ENCODE measurements at regions of chr15 and their contacts with region 1.

Region 1: DNA sequence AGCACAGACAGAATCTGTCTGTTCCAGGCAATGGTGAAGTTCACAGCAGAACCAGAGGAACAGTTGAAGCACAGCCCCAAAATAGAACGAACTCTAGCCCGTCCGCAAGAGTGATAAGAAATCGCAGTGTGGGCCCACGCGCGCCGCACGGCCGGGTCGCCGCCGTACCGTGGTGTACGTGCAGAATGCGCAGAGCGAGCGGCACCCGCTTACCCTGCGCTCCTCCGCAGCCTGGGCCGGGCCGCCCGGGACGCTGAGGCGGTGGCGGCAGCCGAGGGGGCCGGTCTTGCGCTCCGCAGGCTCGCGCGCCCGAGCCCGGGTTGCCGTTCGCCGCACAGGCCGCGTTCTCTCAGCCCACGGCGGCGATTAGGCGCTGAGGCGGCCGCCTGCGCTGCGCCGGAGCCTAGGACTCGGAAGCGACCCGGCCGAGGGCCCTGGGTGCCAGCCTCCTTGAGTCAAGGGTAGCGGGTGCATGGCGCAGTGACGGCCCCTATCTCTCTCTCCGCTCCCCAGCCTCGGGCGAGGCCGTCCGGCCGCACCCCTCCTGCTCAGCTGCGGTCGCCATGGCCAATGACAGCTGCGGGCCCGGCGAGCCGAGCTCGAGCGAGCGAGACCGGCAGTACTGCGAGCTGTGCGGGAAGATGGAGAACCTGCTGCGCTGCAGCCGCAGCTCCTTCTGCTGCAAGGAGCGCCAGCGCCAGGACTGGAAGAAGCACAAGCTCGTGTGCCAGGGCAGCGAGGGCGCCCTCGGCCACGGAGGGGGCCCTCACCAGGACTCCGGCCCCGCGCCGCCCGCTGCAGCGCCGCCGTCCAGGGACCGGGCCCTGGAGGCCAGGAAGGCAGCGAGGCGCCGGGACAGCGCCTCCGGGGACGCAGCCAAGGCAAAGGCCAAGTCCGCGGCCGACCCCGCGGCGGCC is 20.5 kb downstream of the WDR73 start:
- DNase-seq: peak; percentile 60
- H3K4me3 Mint-ChIP-seq: peak overlapping the region; percentile 95
- H3K27ac Mint-ChIP-seq: peak overlapping the region; percentile 98
- H3K4me1 Mint-ChIP-seq: peaks cover 57% of the 10 kb centered on the region
- H3K27me3 Mint-ChIP-seq: no peaks in the 10 kb centered on the region

Region 2: GRCh38 chr15:83626171-83626802 is 1007.3 kb before region 1 on chr15:
- intact Hi-C with region 1: no loop called
- DNase-seq: no peak
- H3K4me3 Mint-ChIP-seq: no peak overlapping the region
- H3K27ac Mint-ChIP-seq: no peak overlapping the region
- H3K4me1 Mint-ChIP-seq: no peaks in the 10 kb centered on the region
- H3K27me3 Mint-ChIP-seq: no peaks in the 10 kb centered on the region

Region 3: GRCh38 chr15:84570164-84570735 is 63.3 kb before region 1 on chr15:
- intact Hi-C with region 1: loop called (anchors 1 kb)
- DNase-seq: peak; percentile 52
- H3K4me3 Mint-ChIP-seq: peak overlapping the region; percentile 84
- H3K27ac Mint-ChIP-seq: peak overlapping the region; percentile 90
- H3K4me1 Mint-ChIP-seq: peaks cover 11% of the 10 kb centered on the region
- H3K27me3 Mint-ChIP-seq: peaks cover 17% of the 10 kb centered on the region

Region 4: GRCh38 chr15:84600851-84601838 is 32.4 kb before region 1 on chr15 and contains the start of gene ZSCAN2:
- intact Hi-C with region 1: loop called (anchors 1 kb)
- DNase-seq: peak; percentile 92
- H3K4me3 Mint-ChIP-seq: peak within 1 kb of the TSS; percentile 89
- H3K27ac Mint-ChIP-seq: peak within 1 kb of the TSS; percentile 72
- H3K4me1 Mint-ChIP-seq: peaks cover 59% of the 10 kb centered on the region
- H3K27me3 Mint-ChIP-seq: no peaks in the 10 kb centered on the region
- total RNA-seq, gene ZSCAN2: 6.5 and 7.0 TPM in 2 replicates

Region 5: GRCh38 chr15:84669726-84670125 is 36.2 kb after region 1 on chr15:
- intact Hi-C with region 1: loop called (anchors 5 kb)
- DNase-seq: no peak
- H3K4me3 Mint-ChIP-seq: peak overlapping the region; percentile 8
- H3K27ac Mint-ChIP-seq: peak overlapping the region; percentile 79
- H3K4me1 Mint-ChIP-seq: peaks cover 44% of the 10 kb centered on the region
- H3K27me3 Mint-ChIP-seq: no peaks in the 10 kb centered on the region

Region 6: DNA sequence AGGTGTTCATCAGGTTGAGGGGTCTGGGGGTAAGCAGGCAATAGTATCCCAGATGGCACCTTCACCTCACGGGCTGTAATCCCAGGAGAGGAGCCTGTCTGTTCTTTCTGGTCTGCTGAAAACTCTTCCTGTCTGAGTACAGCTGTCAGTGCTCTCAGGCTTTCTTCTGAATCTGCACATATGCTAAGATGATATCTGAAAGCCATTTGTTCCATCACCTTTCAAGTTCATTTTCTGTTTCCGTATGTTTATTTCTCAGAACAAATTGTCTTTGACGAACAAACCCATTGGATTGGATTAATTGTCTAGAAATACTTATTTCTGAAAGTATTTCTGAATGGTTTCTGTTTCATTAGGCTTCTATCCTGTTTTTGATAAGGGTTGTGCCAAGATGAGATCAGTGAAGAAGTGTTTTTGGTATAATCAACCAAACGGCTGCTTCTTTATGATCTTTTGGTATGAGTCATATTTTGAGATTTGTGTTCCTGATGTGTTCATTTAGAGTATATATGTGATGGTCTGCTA is 128.1 kb after region 1 on chr15:
- intact Hi-C with region 1: loop called (anchors 1 kb)
- DNase-seq: no peak
- H3K4me3 Mint-ChIP-seq: no peak overlapping the region
- H3K27ac Mint-ChIP-seq: no peak overlapping the region
- H3K4me1 Mint-ChIP-seq: peaks cover 27% of the 10 kb centered on the region
- H3K27me3 Mint-ChIP-seq: no peaks in the 10 kb centered on the region